ENCODE measurements at regions of chr1 and their contacts with region 1.

Region 1: GRCh38 chr1:202710070-202711045 is at the start of gene SYT2:
- DNase-seq: peak in 1 of 2 experiments; percentile 81
- H3K4me3 ChIP-seq: peak within 1 kb of the TSS; percentile 42 to 86 (median 66)
- H3K27ac ChIP-seq: no peak within 1 kb of the TSS
- H3K4me1 ChIP-seq: peaks cover 10 to 30% (median 21%) of the 10 kb centered on the region in 4 experiments
- H3K27me3 ChIP-seq: peaks cover 0 to 30% (median 19%) of the 10 kb centered on the region in 4 experiments; a peak in 5 of 7 replicates
- CTCF ChIP-seq: no peak
- EP300 ChIP-seq: no peak
- POLR2A ChIP-seq: no peak
- RAD21 ChIP-seq: no peak
- total RNA-seq, gene SYT2: 10.7 and 11.0 TPM in 2 replicates

Region 2: GRCh38 chr1:202462342-202463076 is 247.8 kb before region 1 on chr1:
- CTCF ChIA-PET with region 1: interaction called, 18 read pairs
- POLR2A ChIA-PET with region 1: no interaction called
- DNase-seq: no peak
- H3K4me3 ChIP-seq: no peak overlapping the region
- H3K27ac ChIP-seq: no peak overlapping the region
- H3K4me1 ChIP-seq: peaks cover 0 to 2% (median 0%) of the 10 kb centered on the region in 4 experiments; a peak in 1 of 7 replicates
- H3K27me3 ChIP-seq: no peaks in the 10 kb centered on the region
- CTCF ChIP-seq: no peak
- EP300 ChIP-seq: no peak
- POLR2A ChIP-seq: no peak
- RAD21 ChIP-seq: no peak

Region 3: DNA sequence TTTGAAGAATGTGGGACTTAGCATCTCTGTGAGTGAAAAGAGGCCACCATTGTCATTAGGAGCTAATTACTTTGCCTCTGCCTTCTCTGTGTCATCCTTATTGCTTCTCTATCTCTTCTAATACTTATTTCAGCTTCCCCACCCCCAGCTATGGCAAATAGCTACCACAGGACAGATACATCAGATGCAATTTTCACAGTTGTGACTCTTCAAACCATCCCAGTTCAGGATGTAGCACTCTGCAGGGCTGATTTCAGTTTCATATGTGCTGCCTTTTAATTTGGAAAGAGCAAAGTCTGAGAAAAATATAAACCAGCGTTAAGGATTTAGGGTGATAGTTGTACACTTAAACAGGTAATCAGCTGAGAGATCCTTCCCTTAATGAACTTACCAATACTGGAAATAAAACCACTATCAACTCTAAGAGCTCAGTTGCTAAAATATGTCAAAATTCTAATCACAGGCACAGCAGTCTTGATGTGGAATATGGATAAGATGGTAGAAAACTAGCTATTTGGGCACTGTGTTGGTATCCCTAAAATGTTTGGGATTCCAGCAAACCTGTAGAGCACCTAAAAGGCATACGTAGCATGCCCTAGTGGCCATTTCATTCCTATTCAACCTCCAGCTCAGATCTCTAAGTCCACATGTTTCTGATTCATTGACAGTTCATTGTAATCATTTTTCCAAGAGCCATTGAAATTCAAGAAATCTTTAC is 148.5 kb before region 1 on chr1:
- CTCF ChIA-PET with region 1: no interaction called
- POLR2A ChIA-PET with region 1: no interaction called
- DNase-seq: no peak
- H3K4me3 ChIP-seq: no peak overlapping the region
- H3K27ac ChIP-seq: no peak overlapping the region
- H3K4me1 ChIP-seq: peaks cover 3 to 18% (median 8%) of the 10 kb centered on the region in 4 experiments; a peak in 6 of 7 replicates
- H3K27me3 ChIP-seq: no peaks in the 10 kb centered on the region
- CTCF ChIP-seq: peak in 2 of 3 experiments; percentile 30 to 60; a peak in 3 of 4 replicates
- EP300 ChIP-seq: no peak
- POLR2A ChIP-seq: no peak
- RAD21 ChIP-seq: peak; percentile 37 to 46; a peak in 3 of 4 replicates

Region 4: DNA sequence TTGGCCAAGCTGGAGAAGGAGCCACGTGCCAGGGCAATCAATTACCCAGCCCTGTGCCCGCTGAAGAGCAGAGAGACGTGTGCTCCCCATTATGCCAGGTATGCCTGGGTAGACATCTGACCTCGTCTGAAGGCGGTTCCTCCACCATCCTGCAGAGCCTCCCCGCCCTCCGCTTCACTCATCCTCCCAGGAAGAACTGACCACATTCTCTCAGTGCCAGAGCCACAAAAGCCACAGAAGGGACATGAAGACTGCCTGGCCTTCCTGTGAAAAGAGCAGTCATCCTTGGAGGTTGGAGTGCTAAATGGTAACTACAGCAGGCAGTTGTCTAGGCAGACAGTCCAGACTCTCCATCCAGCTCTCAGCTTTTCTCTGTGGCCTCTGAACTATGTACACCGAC is 12.1 kb before region 1 on chr1:
- CTCF ChIA-PET with region 1: interaction called, 180 read pairs
- POLR2A ChIA-PET with region 1: interaction called, 10 read pairs
- DNase-seq: no peak
- H3K4me3 ChIP-seq: no peak overlapping the region
- H3K27ac ChIP-seq: no peak overlapping the region
- H3K4me1 ChIP-seq: peaks cover 0 to 2% (median 0%) of the 10 kb centered on the region in 4 experiments; a peak in 1 of 7 replicates
- H3K27me3 ChIP-seq: no peaks in the 10 kb centered on the region
- CTCF ChIP-seq: no peak
- EP300 ChIP-seq: no peak
- POLR2A ChIP-seq: no peak
- RAD21 ChIP-seq: no peak

Measured in H1 (cell line).